Calu3 (cell line): ENCODE measurements at regions of chr7 and their contacts with region 1.

Region 1: DNA sequence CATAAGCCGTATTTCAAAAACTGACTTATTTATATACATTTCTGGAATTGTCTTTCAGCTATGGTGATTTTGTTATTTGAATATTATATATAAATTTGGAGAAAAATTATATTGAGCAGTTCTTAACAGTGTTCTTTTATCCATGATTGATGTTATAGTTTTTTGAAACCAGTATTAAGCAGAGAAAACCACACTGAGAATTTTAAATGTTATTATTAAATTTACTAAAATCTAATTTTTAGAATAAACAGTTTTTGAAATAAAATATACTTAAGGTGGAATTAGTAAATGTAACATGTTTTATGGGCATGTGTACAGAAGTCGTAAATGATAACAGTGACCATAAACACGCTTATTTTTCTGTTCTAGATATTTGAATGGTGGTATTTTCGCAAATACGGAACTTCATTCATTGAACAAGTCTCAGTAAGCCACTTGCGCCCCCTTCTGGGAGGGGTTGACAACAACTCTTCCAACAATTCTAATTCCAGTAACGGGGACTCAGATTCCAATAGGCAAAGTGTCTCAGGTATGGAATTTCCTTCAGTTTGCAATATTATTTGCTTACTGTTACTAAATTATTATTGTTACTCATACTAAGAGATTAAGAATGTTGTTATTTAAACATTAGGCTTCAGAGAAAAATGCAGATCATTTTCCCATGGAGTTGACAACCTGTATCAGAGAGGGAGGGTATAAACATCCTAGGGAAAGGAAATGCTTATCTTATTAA is 166.1 kb downstream of the ST7 start:
- DNase-seq: peak; percentile 85
- H3K4me3 Mint-ChIP-seq: no peak overlapping the region
- H3K27ac Mint-ChIP-seq: no peak overlapping the region
- H3K4me1 Mint-ChIP-seq: no peaks in the 10 kb centered on the region
- H3K27me3 Mint-ChIP-seq: no peaks in the 10 kb centered on the region
- CTCF ChIP-seq: peak; percentile 70

Region 2: DNA sequence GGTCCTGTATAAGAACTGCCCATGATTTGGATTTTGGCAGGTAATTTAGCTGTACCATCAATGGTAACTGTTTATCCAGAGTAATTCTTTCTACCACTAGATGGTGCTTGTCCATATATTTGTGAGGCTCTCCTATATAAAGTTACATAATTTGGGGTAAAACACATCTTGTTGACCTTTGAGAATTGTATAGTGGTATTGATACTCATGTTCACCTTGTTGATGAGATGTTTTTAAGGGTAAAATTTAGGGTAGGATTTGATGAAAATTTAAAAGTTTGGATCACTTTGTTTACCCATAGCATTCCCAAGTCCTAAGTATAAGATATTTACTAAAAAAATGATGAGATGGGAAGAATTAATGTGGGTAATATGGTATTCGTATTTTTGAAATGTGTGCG is 134.4 kb before region 1 on chr7:
- CTCF ChIA-PET with region 1: interaction called, 6 read pairs
- intact Hi-C with region 1: loop called (anchors 1 kb)
- DNase-seq: no peak
- H3K4me3 Mint-ChIP-seq: no peak overlapping the region
- H3K27ac Mint-ChIP-seq: no peak overlapping the region
- H3K4me1 Mint-ChIP-seq: peaks cover 6% of the 10 kb centered on the region
- H3K27me3 Mint-ChIP-seq: no peaks in the 10 kb centered on the region
- CTCF ChIP-seq: peak; percentile 45